Caco-2 (cell line): ENCODE measurements at regions of chr5 and their contacts with region 1.

Region 1: GRCh38 chr5:66306105-66306843 is 162.2 kb downstream of the SREK1 start:
- DNase-seq: peak; percentile 56 to 64
- H3K4me3 ChIP-seq: no peak overlapping the region
- H3K4me3 Mint-ChIP-seq: no peak overlapping the region
- H3K27ac Mint-ChIP-seq: no peak overlapping the region
- H3K4me1 ChIP-seq: no peaks in the 10 kb centered on the region
- H3K4me1 Mint-ChIP-seq: no peaks in the 10 kb centered on the region
- H3K27me3 ChIP-seq: no peaks in the 10 kb centered on the region
- H3K27me3 Mint-ChIP-seq: peaks cover 14% of the 10 kb centered on the region
- CTCF ChIP-seq: peak; percentile 72 to 93

Region 2: GRCh38 chr5:66436721-66437120 is 130.4 kb after region 1 on chr5:
- CTCF ChIA-PET with region 1: no interaction called
- POLR2A ChIA-PET with region 1: no interaction called
- intact Hi-C with region 1: loop called (anchors 1 kb)
- DNase-seq: peak in 1 of 2 experiments; percentile 18
- H3K4me3 ChIP-seq: no peak overlapping the region
- H3K4me3 Mint-ChIP-seq: no peak overlapping the region
- H3K27ac Mint-ChIP-seq: no peak overlapping the region
- H3K4me1 ChIP-seq: no peaks in the 10 kb centered on the region
- H3K4me1 Mint-ChIP-seq: no peaks in the 10 kb centered on the region
- H3K27me3 ChIP-seq: no peaks in the 10 kb centered on the region
- H3K27me3 Mint-ChIP-seq: peaks cover 6% of the 10 kb centered on the region
- CTCF ChIP-seq: peak; percentile 48 to 50

Region 3: GRCh38 chr5:66595756-66596635 is 289.7 kb after region 1 on chr5 and contains the start of gene MAST4:
- CTCF ChIA-PET with region 1: no interaction called
- POLR2A ChIA-PET with region 1: no interaction called
- intact Hi-C with region 1: loop called (anchors 2 kb)
- DNase-seq: peak; percentile 93
- H3K4me3 ChIP-seq: peak within 1 kb of the TSS; percentile 61
- H3K4me3 Mint-ChIP-seq: peak within 1 kb of the TSS; percentile 78
- H3K27ac Mint-ChIP-seq: no peak within 1 kb of the TSS
- H3K4me1 ChIP-seq: peaks cover 13% of the 10 kb centered on the region
- H3K4me1 Mint-ChIP-seq: no peaks in the 10 kb centered on the region
- H3K27me3 ChIP-seq: peaks cover 5% of the 10 kb centered on the region
- H3K27me3 Mint-ChIP-seq: peaks cover 29% of the 10 kb centered on the region
- CTCF ChIP-seq: no peak
- total RNA-seq, gene MAST4: 17.8 and 21.5 TPM in 2 replicates

Region 4: GRCh38 chr5:66757188-66757833 is 451.0 kb after region 1 on chr5:
- CTCF ChIA-PET with region 1: interaction called, 34 read pairs
- POLR2A ChIA-PET with region 1: no interaction called
- intact Hi-C with region 1: loop called (anchors 1 kb)
- DNase-seq: peak in 1 of 2 experiments; percentile 36
- H3K4me3 ChIP-seq: no peak overlapping the region
- H3K4me3 Mint-ChIP-seq: no peak overlapping the region
- H3K27ac Mint-ChIP-seq: no peak overlapping the region
- H3K4me1 ChIP-seq: no peaks in the 10 kb centered on the region
- H3K4me1 Mint-ChIP-seq: no peaks in the 10 kb centered on the region
- H3K27me3 ChIP-seq: no peaks in the 10 kb centered on the region
- H3K27me3 Mint-ChIP-seq: peaks cover 22% of the 10 kb centered on the region
- CTCF ChIP-seq: peak; percentile 51 to 58

Region 5: DNA sequence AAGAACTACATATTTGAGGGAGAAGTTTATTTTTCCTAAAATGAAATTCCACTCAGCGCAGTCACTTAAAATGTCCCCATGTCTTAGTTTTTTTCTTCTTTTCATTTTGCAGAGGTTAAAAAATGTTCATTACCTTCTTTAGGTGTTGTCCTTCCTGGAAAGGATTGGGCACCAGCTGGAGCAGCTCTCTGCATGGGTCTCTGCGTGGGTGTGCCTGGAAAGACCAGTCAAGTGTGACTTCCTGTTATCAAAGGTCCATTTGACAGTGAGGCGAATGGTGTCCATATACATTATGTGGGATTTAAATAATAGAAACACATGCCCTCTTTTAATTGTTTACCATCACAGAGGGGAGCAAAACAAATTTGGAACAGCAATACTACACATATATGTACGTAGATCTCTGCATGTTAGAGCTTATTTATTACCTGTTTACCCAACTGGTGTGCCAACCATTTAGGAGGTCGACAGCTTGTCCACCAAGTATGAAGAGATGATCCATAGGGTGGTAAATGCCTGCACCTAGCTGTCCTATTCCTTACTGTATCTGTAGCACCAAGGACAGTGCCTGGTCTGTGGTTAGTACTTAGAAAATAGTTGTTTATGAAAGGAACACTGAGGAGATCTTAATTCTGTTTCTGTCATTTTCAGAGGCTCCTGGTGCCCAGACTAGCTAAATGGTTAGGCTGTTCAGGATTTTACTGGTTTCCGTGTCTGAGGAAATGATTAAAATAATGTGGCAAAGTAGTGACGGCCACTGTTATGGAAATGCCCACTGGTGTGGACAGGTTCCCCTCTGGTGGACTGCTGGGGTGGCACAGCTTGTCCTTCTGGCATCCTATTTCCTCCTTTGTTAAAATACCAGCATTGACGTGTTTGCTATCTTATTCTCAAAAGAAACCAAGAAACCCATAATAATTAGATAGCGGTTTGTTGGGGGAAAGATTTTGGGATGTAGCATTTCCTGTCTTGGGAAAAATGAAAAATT is 490.3 kb after region 1 on chr5:
- CTCF ChIA-PET with region 1: interaction called, 3 read pairs
- POLR2A ChIA-PET with region 1: no interaction called
- intact Hi-C with region 1: loop called (anchors 1 kb)
- DNase-seq: peak in 1 of 2 experiments; percentile 5
- H3K4me3 ChIP-seq: no peak overlapping the region
- H3K4me3 Mint-ChIP-seq: no peak overlapping the region
- H3K27ac Mint-ChIP-seq: no peak overlapping the region
- H3K4me1 ChIP-seq: no peaks in the 10 kb centered on the region; the same call in 1 of the 2 replicates
- H3K4me1 Mint-ChIP-seq: peaks cover 4% of the 10 kb centered on the region
- H3K27me3 ChIP-seq: no peaks in the 10 kb centered on the region
- H3K27me3 Mint-ChIP-seq: peaks cover 26% of the 10 kb centered on the region
- CTCF ChIP-seq: peak in 1 of 2 experiments; percentile 11